Sciatic nerve (tissue), 2 donors: ENCODE measurements at regions of chr1 and their contacts with region 1.

Region 1: GRCh38 chr1:21508580-21509350 is 458 bp upstream of the ALPL start:
- DNase-seq: peak; percentile 81
- ATAC-seq: peak; percentile 66

Region 2: DNA sequence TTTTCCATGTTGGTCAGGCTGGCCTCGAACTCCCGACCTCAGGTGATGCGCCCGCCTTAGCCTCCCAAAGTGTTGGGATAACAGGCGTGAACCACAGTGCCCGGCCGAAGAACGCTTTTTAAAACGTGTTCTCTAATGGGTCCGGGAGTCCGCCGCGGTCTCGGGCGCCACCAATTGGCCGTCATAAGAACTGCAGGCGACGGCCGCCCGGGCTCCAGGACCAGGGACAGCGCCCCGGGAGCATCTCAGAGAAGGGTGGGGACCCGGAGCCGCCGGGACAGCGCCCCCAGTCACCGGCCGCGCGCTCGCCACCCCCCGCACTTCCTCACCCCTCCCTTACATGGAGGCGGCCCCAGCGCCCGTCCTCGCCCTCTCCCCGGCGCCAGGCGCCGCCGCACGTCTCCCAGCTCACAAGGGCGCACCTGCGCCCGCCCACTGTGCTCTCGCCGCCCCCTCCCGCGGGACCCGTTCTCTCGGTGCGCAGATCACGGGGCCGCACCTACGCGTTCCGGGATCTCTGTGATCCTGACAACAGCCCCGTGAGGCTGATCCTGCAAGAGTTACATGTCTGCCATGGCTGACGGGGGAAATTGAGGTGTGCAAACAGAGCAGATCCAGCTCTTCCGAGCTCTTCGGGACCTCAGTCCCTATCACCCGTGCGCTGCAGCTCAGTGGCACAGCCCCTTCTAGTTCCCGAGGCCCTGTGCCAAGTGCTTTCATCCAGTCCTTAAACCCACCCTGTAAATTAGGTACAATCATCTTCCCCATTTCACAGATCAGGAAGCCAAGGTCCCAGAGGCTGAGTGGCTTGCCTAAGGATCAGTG is 150.5 kb after region 1 on chr1:
- intact Hi-C with region 1: loop called (anchors 5 kb)
- DNase-seq: peak; percentile 84
- ATAC-seq: peak; percentile 81